RWPE1 (cell line): ENCODE measurements at regions of chr3 and their contacts with region 1.

Region 1: DNA sequence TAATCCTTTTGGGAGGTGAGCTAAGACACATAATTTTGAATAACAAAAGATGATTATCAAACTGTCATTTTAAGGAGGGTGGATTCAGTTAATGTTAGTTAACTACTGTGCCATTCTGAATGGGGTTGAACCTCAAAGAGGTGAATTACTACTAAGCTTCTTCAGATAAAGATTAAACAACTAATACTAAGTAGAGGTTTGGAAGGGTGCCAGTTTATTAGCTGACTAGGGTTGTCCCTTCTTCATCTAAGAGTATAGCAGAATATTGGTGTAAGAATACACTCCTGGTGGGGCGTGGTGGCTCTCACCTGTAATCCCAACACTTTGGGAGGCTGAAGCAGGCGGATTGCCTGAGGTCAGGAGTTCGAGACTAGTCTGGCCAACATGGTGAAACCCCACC is 123.1 kb upstream of the LRRFIP2 start:
- DNase-seq: no peak
- H3K27ac ChIP-seq: no peak overlapping the region
- CTCF ChIP-seq: no peak

Region 2: DNA sequence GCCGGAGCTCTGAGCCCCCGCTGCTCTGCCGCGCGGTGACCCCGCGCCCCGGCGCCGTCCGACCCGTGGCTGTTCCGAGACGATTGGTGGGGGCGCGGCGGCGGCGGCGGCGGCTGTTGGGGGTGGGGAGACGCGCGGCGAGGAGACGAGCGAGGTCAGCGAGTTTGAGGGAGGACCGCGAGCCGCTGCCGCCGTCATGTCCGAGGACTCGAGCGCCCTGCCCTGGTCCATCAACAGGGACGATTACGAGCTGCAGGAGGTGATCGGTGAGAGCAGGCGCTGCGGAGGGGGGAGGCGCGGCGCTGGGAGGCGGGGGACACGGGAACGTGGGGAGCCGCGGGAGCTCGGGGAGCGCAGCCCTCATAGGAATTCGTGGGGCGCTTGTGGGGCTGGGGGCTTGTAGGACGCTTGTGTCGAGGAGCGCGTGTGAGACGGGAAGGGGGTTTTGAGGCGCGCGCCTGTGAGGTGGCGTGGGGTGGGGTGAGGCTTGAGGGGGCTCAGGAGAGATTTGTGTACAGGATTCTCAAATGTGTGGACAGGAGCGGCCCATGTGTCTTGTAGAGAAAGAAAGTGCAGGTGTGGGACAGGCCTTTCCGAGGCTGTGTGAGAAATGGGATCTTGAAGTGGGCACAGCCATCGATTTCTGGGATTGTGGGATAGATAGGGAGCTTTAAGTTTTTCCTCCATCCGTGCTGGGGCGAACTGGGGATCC is 868.4 kb after region 1 on chr3:
- CTCF ChIA-PET with region 1: no interaction called
- POLR2A ChIA-PET with region 1: interaction called, 12 read pairs
- DNase-seq: peak; percentile 38
- H3K27ac ChIP-seq: peak overlapping the region; percentile 95
- CTCF ChIP-seq: no peak